Ovary (tissue), 10 donors: ENCODE measurements at regions of chr2 and their contacts with region 1.

Region 1: GRCh38 chr2:37982147-37982582 is 57.1 kb downstream of the RMDN2 start:
- DNase-seq: peak; percentile 60 to 80 (median 77)
- H3K4me3 ChIP-seq: peak overlapping the region; percentile 13
- H3K27ac ChIP-seq: no peak overlapping the region
- H3K4me1 ChIP-seq: no peaks in the 10 kb centered on the region
- H3K27me3 ChIP-seq: no peaks in the 10 kb centered on the region
- CTCF ChIP-seq: peak; percentile 78 to 84 (median 82)
- EP300 ChIP-seq: no peak
- POLR2A ChIP-seq: no peak

Region 2: DNA sequence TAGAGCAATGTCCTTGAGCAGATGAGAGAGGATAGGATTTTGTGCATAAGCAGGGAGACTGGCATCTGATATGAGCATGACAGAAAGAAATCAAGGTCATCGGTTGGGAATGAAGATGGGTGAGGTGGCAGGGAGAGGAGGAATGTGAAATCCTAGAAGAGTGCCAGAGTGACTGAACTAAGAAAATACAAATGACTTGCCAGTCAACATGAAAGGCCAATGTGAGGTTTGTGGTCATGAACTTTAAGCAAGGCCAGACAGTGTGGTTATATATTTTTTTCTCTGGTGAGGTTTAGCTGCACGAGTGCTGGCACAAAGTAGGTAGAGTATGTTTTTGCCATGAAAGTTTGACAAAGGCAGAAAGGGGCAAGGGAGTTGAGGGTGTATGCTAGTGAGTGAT is 616.5 kb before region 1 on chr2:
- intact Hi-C with region 1: no loop called
- DNase-seq: no peak
- H3K4me3 ChIP-seq: no peak overlapping the region
- H3K27ac ChIP-seq: no peak overlapping the region
- H3K4me1 ChIP-seq: no peaks in the 10 kb centered on the region
- H3K27me3 ChIP-seq: no peaks in the 10 kb centered on the region
- CTCF ChIP-seq: no peak
- EP300 ChIP-seq: no peak
- POLR2A ChIP-seq: no peak

Region 3: DNA sequence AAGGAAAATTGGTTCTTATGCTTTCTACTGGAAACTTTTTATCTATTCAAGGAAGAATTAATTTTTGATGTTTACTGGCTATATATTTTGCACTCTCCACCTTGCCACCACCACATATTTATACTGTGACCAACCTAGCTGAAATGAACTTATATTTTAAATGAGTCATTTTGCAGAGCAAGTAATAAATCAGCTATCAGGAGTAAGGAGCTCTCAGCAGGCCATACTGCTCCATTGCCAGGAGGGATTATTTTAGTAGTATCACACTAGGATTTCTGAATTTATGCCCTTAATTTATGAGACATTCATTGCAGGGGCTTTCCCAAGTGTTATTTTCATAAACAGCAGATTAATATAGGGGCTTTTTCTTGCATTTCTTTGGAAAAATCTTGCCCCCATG is 219.6 kb after region 1 on chr2:
- intact Hi-C with region 1: no loop called
- DNase-seq: no peak
- H3K4me3 ChIP-seq: no peak overlapping the region
- H3K27ac ChIP-seq: no peak overlapping the region
- H3K4me1 ChIP-seq: peaks cover 19% of the 10 kb centered on the region
- H3K27me3 ChIP-seq: no peaks in the 10 kb centered on the region
- CTCF ChIP-seq: no peak
- EP300 ChIP-seq: no peak
- POLR2A ChIP-seq: no peak

Region 4: GRCh38 chr2:38274286-38275276 is 292.4 kb after region 1 on chr2:
- intact Hi-C with region 1: loop called (anchors 2 to 5 kb)
- DNase-seq: peak in 2 of 5 donors; percentile 19 to 44
- H3K4me3 ChIP-seq: no peak overlapping the region
- H3K27ac ChIP-seq: no peak overlapping the region
- H3K4me1 ChIP-seq: no peaks in the 10 kb centered on the region
- H3K27me3 ChIP-seq: no peaks in the 10 kb centered on the region
- CTCF ChIP-seq: peak; percentile 51 to 93 (median 91)
- EP300 ChIP-seq: no peak
- POLR2A ChIP-seq: no peak